HAP-1 (cell line): ENCODE measurements at regions of chrX and their contacts with region 1.

Region 1: DNA sequence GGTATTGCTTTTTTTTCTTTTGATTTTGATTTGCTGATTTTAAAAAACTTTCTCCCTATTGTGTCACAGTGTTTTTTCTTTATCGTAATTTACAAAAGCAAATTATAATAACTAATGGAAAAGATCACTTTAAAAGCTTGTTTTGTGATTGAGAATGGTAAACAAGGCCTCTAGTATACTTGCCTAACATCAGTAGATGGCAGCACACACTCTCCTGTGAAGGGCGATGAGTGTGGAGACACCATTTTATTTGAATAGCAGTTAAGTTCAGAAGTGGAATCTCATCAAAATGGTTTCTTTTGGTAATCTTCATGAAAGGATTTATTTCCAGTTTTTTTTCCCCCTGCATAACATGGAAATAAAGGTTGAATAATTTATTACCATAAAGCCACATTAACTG is 72.3 kb downstream of the PAK3 start:
- DNase-seq: peak; percentile 65 to 85
- H3K4me3 ChIP-seq: no peak overlapping the region
- H3K4me1 ChIP-seq: peaks cover 9% of the 10 kb centered on the region; the same call in 1 of the 2 replicates
- H3K27me3 ChIP-seq: no peaks in the 10 kb centered on the region

Region 2: DNA sequence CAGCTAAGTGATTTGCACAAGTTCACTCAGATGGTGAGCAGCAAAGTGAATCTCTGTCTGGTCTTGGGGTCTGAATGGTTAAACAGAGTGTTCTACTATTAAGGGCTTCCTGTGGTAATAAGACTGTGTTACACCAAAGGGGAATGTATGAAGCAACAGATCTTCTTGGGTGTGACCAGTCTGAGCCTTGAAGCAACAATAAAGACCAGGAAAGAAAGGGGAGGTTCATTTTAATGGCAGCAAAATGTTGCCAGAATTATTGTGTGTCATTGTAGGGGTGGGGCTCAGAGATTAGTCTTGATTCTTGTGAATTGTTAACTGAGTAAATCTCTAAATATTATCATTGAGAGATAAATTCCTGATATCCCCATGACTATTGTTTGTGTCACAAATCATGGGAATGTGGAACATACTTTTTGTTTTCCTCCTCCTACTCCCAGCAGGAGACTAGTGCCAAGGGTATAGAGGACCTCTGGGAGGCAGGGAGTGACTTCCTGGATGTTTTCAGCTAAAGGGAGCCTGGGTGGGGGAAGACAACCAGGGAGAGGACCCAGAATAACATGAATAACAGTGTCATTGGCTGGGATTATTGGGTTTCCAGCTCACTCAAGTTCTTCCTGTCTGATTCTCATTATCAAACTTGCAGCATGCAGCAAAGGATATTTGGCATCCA is 213.8 kb before region 1 on chrX:
- in situ Hi-C with region 1: no loop called
- DNase-seq: no peak
- H3K4me3 ChIP-seq: no peak overlapping the region
- H3K4me1 ChIP-seq: peaks cover 4% of the 10 kb centered on the region; the same call in 1 of the 2 replicates
- H3K27me3 ChIP-seq: no peaks in the 10 kb centered on the region

Region 3: GRCh38 chrX:111244235-111244750 is 76.0 kb after region 1 on chrX:
- in situ Hi-C with region 1: loop called (anchors 5 kb)
- DNase-seq: peak in 1 of 2 experiments; percentile 97
- H3K4me3 ChIP-seq: no peak overlapping the region
- H3K4me1 ChIP-seq: peaks cover 13% of the 10 kb centered on the region
- H3K27me3 ChIP-seq: no peaks in the 10 kb centered on the region

Region 4: DNA sequence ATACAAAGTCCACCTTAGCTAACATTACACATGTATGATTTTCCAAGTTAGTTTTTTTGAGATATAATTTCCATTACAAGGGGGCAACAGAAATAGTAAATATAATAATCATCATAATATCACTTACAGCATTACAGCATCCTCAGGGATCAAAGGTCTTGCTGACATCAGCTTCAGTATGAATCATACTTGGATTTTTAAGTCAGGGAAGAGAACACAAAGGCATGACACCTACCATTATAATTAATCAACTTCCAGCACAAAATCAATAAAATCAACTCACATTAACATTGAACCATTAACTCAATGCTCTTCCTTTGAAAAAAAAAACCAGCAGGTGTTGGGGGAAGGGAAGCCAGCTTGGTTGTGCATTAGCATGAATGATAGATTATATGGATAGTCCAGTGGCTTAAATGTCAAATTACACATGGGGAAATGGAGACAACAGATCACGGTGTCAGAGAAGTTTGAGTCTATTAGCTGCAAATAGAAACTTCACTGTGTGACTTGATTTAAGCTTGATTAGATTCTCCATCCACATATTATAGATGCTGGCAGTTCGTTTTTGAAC is 168.8 kb after region 1 on chrX:
- in situ Hi-C with region 1: no loop called
- DNase-seq: no peak
- H3K4me3 ChIP-seq: no peak overlapping the region
- H3K4me1 ChIP-seq: no peaks in the 10 kb centered on the region
- H3K27me3 ChIP-seq: peaks cover 4% of the 10 kb centered on the region; the same call in 1 of the 2 replicates

Region 5: DNA sequence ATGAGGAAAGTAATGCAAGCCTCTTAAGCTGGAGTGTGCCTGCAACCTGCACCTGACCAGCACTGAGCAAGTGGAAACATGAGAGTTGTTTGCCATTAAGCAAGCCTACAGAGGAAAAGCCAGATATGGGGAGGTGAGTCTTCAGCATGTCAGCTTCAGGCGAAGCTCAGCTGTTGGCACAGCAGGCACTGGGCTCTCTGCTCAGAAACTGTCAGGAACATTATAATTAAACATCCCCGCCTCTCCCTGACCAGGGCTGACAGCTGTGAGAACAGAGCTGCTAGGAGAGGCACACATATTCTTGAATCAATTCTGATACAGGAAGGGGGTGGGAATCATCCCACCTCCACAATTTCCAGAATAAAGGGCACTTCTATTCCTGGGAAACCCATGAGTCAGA is 262.7 kb after region 1 on chrX:
- in situ Hi-C with region 1: no loop called
- DNase-seq: no peak
- H3K4me3 ChIP-seq: no peak overlapping the region
- H3K4me1 ChIP-seq: no peaks in the 10 kb centered on the region
- H3K27me3 ChIP-seq: no peaks in the 10 kb centered on the region

Region 6: GRCh38 chrX:111445486-111445885 is 277.2 kb after region 1 on chrX:
- in situ Hi-C with region 1: loop called (anchors 10 kb)
- DNase-seq: peak in 1 of 2 experiments; percentile 76
- H3K4me3 ChIP-seq: no peak overlapping the region
- H3K4me1 ChIP-seq: peaks cover 5% of the 10 kb centered on the region; the same call in 1 of the 2 replicates
- H3K27me3 ChIP-seq: peaks cover 4% of the 10 kb centered on the region; the same call in 1 of the 2 replicates

Region 7: GRCh38 chrX:111784667-111785066 is 616.4 kb after region 1 on chrX:
- in situ Hi-C with region 1: no loop called
- DNase-seq: no peak
- H3K4me3 ChIP-seq: no peak overlapping the region
- H3K4me1 ChIP-seq: no peaks in the 10 kb centered on the region
- H3K27me3 ChIP-seq: no peaks in the 10 kb centered on the region